ENCODE measurements at regions of chr12 and their contacts with region 1.

Region 1: DNA sequence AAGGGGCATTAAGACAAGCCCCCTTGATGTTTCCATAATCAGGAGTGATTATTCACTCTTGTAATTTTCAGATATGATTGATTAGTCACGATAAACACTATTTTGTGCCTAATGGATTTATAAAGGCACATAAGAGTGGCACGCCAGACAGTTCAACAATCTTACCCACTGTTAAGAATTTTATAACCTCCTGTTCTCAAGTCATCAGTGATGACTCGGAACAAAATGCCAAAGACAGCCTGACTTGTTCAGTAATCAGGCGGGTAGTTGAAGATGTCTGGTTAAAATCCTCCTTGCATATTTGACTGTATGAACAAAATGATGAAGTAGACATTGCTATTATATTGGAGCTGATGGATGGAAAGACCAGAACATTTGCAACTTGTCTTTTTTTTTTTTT is 212.1 kb upstream of the RMST start:
- DNase-seq: no peak
- ATAC-seq: no peak
- H3K4me3 ChIP-seq: no peak overlapping the region
- H3K27ac ChIP-seq: no peak overlapping the region
- H3K4me1 ChIP-seq: no peaks in the 10 kb centered on the region
- H3K27me3 ChIP-seq: no peaks in the 10 kb centered on the region
- CTCF ChIP-seq: no peak

Region 2: DNA sequence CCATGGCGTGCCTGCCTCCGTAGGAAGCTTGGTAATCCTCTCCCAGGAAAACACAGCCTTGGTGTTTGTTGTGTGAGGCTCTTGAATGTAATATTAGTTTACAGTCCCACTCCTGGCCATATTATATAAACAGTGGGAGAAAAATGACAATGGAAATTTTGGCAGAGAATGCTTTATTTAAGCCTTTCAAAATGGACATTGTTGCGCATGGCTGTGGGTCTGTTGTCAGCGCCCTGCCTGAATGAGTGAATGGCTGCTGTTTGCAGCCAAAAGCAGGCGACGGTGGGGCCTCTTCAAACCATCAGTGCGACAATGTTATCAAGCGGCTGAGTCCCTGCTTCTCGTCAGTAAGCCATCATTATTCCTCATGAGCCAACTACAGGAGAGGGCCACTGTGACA is 10.3 kb after region 1 on chr12:
- intact Hi-C with region 1: loop called in 1 of 10 experiments (anchors 1 kb)
- DNase-seq: no peak
- ATAC-seq: no peak
- H3K4me3 ChIP-seq: no peak overlapping the region
- H3K27ac ChIP-seq: no peak overlapping the region
- H3K4me1 ChIP-seq: no peaks in the 10 kb centered on the region
- H3K27me3 ChIP-seq: peaks cover 0 to 4% (median 0%) of the 10 kb centered on the region in 7 donors
- CTCF ChIP-seq: no peak